ENCODE measurements at regions of chrX and their contacts with region 1.

Region 1: GRCh38 chrX:102659790-102660757 is 8.8 kb downstream of the GPRASP1 start:
- DNase-seq: peak; percentile 64 to 88 (median 80)
- ATAC-seq: peak; percentile 96
- H3K4me3 ChIP-seq: peak overlapping the region; percentile 59
- H3K4me3 Mint-ChIP-seq: peak overlapping the region; percentile 92
- H3K27ac ChIP-seq: peak overlapping the region in 1 of 2 donors; percentile 15
- H3K27ac Mint-ChIP-seq: peak overlapping the region; percentile 89
- H3K4me1 ChIP-seq: peaks cover 11% of the 10 kb centered on the region
- H3K4me1 Mint-ChIP-seq: peaks cover 50% of the 10 kb centered on the region
- H3K27me3 ChIP-seq: no peaks in the 10 kb centered on the region
- H3K27me3 Mint-ChIP-seq: no peaks in the 10 kb centered on the region
- CTCF ChIP-seq: no peak

Region 2: GRCh38 chrX:102515975-102516941 is 143.8 kb before region 1 on chrX and contains the start of gene TMSB15A:
- CTCF ChIA-PET with region 1: no interaction called
- POLR2A ChIA-PET with region 1: no interaction called
- intact Hi-C with region 1: loop called in 1 of 2 experiments (anchors 10 kb)
- DNase-seq: peak; percentile 11 to 67 (median 48)
- ATAC-seq: peak; percentile 88
- H3K4me3 ChIP-seq: peak within 1 kb of the TSS; percentile 36
- H3K4me3 Mint-ChIP-seq: peak within 1 kb of the TSS; percentile 83
- H3K27ac ChIP-seq: no peak within 1 kb of the TSS
- H3K27ac Mint-ChIP-seq: no peak within 1 kb of the TSS
- H3K4me1 ChIP-seq: peaks cover 7% of the 10 kb centered on the region
- H3K4me1 Mint-ChIP-seq: peaks cover 4% of the 10 kb centered on the region
- H3K27me3 ChIP-seq: peaks cover 5 to 21% of the 10 kb centered on the region in 2 experiments
- H3K27me3 Mint-ChIP-seq: peaks cover 42% of the 10 kb centered on the region
- CTCF ChIP-seq: no peak
- total RNA-seq, gene TMSB15A: not detected

Region 3: GRCh38 chrX:102714994-102715393 is 54.9 kb after region 1 on chrX:
- CTCF ChIA-PET with region 1: no interaction called
- POLR2A ChIA-PET with region 1: no interaction called
- intact Hi-C with region 1: loop called (anchors 5 to 10 kb)
- DNase-seq: no peak
- ATAC-seq: no peak
- H3K4me3 ChIP-seq: no peak overlapping the region
- H3K4me3 Mint-ChIP-seq: no peak overlapping the region
- H3K27ac ChIP-seq: no peak overlapping the region
- H3K27ac Mint-ChIP-seq: no peak overlapping the region
- H3K4me1 ChIP-seq: peaks cover 14% of the 10 kb centered on the region
- H3K4me1 Mint-ChIP-seq: peaks cover 15% of the 10 kb centered on the region
- H3K27me3 ChIP-seq: peaks cover 0 to 5% of the 10 kb centered on the region in 2 experiments
- H3K27me3 Mint-ChIP-seq: peaks cover 11% of the 10 kb centered on the region
- CTCF ChIP-seq: no peak

Region 4: GRCh38 chrX:102720237-102721168 is 60.4 kb after region 1 on chrX and contains the start of gene GPRASP3:
- CTCF ChIA-PET with region 1: no interaction called
- POLR2A ChIA-PET with region 1: interaction called, 6 read pairs
- intact Hi-C with region 1: loop called (anchors 5 to 10 kb)
- DNase-seq: peak; percentile 39 to 83 (median 62)
- ATAC-seq: peak; percentile 99
- H3K4me3 ChIP-seq: peak within 1 kb of the TSS; percentile 56
- H3K4me3 Mint-ChIP-seq: peak within 1 kb of the TSS; percentile 92
- H3K27ac ChIP-seq: no peak within 1 kb of the TSS
- H3K27ac Mint-ChIP-seq: peak within 1 kb of the TSS; percentile 77
- H3K4me1 ChIP-seq: peaks cover 8% of the 10 kb centered on the region
- H3K4me1 Mint-ChIP-seq: peaks cover 13% of the 10 kb centered on the region
- H3K27me3 ChIP-seq: no peaks in the 10 kb centered on the region
- H3K27me3 Mint-ChIP-seq: no peaks in the 10 kb centered on the region
- CTCF ChIP-seq: no peak
- total RNA-seq, gene GPRASP3: 1.5 to 2.6 TPM

Measured in CD4-positive, alpha-beta T cell (primary cell).